ENCODE measurements at regions of chr20 and their contacts with region 1.

Region 1: DNA sequence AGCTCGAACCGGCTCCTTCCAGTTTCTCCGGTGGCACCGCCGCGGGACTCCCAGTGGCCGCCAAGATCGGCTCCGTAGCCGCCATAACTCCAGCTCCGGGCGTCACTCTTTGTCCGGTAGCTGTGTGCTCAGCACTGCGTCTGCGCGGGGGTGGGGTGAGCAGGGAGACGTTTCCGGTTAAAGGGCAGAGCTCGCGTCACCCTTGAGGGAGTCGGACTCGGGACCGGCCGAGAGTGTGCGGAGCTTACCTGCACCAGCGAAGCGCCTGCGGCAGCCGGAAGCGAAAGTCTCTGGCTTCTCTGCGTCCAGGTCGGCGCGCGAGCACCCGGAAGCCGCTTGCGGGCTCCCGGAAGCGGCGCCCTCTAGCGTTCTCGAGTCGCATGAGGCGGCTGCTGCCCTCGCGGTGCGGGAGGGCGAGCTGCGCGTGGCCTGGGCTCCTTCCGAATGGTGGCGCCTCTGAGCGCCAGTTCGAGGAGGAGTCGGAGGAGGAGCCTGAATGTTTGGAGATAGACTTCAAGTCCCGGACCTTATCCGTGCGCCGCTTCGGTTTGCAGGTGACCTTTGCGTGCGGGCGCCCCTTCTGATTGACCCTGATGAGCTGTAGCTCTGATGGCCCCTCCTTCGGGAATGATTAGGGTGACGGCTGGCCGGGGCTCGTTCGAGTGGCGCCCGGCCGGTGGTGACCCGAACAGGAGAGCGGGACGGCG is at the start of gene SCAND1:
- DNase-seq: peak; percentile 94 to 98 (median 97)
- ATAC-seq: peak; percentile 92
- H3K4me3 ChIP-seq: peak within 1 kb of the TSS; percentile 84
- H3K4me3 Mint-ChIP-seq: peak within 1 kb of the TSS; percentile 86 to 99 (median 99)
- H3K27ac ChIP-seq: peak within 1 kb of the TSS; percentile 98
- H3K27ac Mint-ChIP-seq: peak within 1 kb of the TSS; percentile 96 to 100 (median 99)
- H3K4me1 ChIP-seq: peaks cover 17 to 23% of the 10 kb centered on the region in 2 donors
- H3K4me1 Mint-ChIP-seq: peaks cover 13 to 36% (median 22%) of the 10 kb centered on the region in 7 donors
- H3K27me3 ChIP-seq: no peaks in the 10 kb centered on the region
- H3K27me3 Mint-ChIP-seq: peaks cover 0 to 2% (median 0%) of the 10 kb centered on the region in 5 donors
- total RNA-seq, gene SCAND1: 41.8 to 56.2 (median 51.7) TPM

Region 2: DNA sequence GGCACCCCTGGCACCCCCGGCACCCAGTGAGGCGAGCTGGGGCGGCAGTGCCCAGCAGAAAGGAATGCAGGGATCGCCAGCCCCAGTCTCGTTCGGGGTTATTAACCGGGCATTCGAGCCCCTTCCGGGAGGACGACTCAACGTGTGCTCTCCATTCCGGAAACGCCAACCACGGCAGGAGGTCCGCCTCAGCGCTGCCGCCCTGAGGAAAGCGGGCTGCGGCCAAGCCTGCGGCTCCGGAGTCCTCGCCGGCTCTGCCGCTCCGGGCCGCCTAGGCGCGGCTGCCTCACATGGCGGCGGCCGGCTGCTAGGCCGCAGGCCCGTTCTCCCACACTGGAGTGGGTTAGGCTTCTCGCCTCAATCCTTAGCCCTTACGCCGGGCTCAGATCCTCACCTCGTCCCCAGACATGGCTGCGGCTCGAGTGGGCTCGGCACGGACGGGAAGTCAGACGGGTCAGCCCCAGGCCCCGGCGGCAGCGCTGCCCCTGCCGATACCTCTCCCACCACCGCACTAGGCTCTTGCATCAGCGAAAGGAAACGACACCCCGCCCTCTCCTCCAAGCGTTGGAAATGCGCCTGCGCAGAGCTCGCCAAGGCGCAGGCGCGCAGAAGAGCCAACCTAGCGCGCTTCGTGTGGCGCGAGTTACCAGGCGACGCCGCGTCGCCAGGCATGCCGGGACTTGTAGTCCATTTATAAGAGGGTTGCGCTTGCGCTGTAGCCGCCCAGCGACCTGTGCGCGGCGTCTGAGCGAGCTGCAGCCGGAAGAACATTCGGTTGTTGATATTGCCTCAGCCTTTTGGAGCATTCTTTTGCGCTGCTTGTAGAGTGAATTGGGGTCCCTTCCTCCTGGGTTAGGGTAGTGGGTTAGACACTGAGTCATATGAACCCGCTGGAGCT is 1842.4 kb before region 1 on chr20 and contains the start of gene EIF2S2:
- CTCF ChIA-PET with region 1: no interaction called
- POLR2A ChIA-PET with region 1: no interaction called
- intact Hi-C with region 1: loop called in 1 of 2 experiments (anchors 1 kb)
- DNase-seq: peak; percentile 88 to 97 (median 95)
- ATAC-seq: peak; percentile 95
- H3K4me3 ChIP-seq: peak within 1 kb of the TSS; percentile 92
- H3K4me3 Mint-ChIP-seq: peak within 1 kb of the TSS; percentile 87 to 98 (median 96)
- H3K27ac ChIP-seq: peak within 1 kb of the TSS; percentile 89
- H3K27ac Mint-ChIP-seq: peak within 1 kb of the TSS; percentile 96 to 99 (median 98)
- H3K4me1 ChIP-seq: peaks cover 24 to 34% of the 10 kb centered on the region in 2 donors
- H3K4me1 Mint-ChIP-seq: peaks cover 34 to 53% (median 47%) of the 10 kb centered on the region in 7 donors
- H3K27me3 ChIP-seq: no peaks in the 10 kb centered on the region
- H3K27me3 Mint-ChIP-seq: peaks cover 0 to 15% (median 0%) of the 10 kb centered on the region in 5 donors
- total RNA-seq, gene EIF2S2: 16.8 to 68.4 (median 48.6) TPM

Region 3: GRCh38 chr20:35092524-35093266 is 861.7 kb before region 1 on chr20 and contains the start of gene TRPC4AP:
- CTCF ChIA-PET with region 1: no interaction called
- POLR2A ChIA-PET with region 1: no interaction called
- intact Hi-C with region 1: loop called in 1 of 2 experiments (anchors 10 kb)
- DNase-seq: peak; percentile 83 to 90 (median 87)
- ATAC-seq: peak; percentile 99
- H3K4me3 ChIP-seq: peak within 1 kb of the TSS; percentile 77
- H3K4me3 Mint-ChIP-seq: peak within 1 kb of the TSS; percentile 87 to 98 (median 90)
- H3K27ac ChIP-seq: peak within 1 kb of the TSS; percentile 89
- H3K27ac Mint-ChIP-seq: peak within 1 kb of the TSS; percentile 81 to 98 (median 94)
- H3K4me1 ChIP-seq: peaks cover 15 to 22% of the 10 kb centered on the region in 2 donors
- H3K4me1 Mint-ChIP-seq: peaks cover 27 to 54% (median 51%) of the 10 kb centered on the region in 7 donors
- H3K27me3 ChIP-seq: no peaks in the 10 kb centered on the region
- H3K27me3 Mint-ChIP-seq: no peaks in the 10 kb centered on the region
- total RNA-seq, gene TRPC4AP: 50.5 to 66.0 (median 60.6) TPM

Region 4: GRCh38 chr20:35541783-35542588 is 412.4 kb before region 1 on chr20 and contains the start of gene ERGIC3:
- CTCF ChIA-PET with region 1: no interaction called
- POLR2A ChIA-PET with region 1: interaction called, 7 read pairs
- intact Hi-C with region 1: loop called (anchors 1 to 5 kb)
- DNase-seq: peak; percentile 94 to 98 (median 95)
- ATAC-seq: peak; percentile 100
- H3K4me3 ChIP-seq: peak within 1 kb of the TSS; percentile 82
- H3K4me3 Mint-ChIP-seq: peak within 1 kb of the TSS; percentile 88 to 92 (median 91)
- H3K27ac ChIP-seq: peak within 1 kb of the TSS; percentile 77
- H3K27ac Mint-ChIP-seq: peak within 1 kb of the TSS; percentile 82 to 96 (median 91)
- H3K4me1 ChIP-seq: peaks cover 11 to 12% of the 10 kb centered on the region in 2 donors
- H3K4me1 Mint-ChIP-seq: peaks cover 9 to 32% (median 23%) of the 10 kb centered on the region in 7 donors
- H3K27me3 ChIP-seq: no peaks in the 10 kb centered on the region
- H3K27me3 Mint-ChIP-seq: no peaks in the 10 kb centered on the region
- total RNA-seq, gene ERGIC3: 139 to 158 (median 148) TPM

Region 5: DNA sequence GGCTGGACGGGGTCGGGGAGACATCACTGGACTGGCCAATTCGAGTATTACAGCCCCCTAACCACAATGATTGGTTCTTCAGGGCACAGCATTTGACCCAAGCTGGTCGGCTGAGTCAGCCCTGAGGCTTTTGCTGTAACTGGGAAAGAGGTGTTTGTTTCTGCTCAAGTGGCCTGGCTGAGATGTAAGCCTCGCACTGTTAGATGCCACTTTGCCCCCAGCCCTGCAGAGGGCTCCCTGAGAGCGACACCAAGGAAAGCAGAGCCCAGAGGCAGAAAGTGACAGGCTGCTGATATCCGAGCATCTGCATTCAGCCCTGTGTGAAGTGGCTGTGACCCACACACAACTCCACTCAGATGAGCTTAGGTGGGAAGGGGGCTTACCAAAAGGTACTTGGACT is 393.1 kb before region 1 on chr20:
- CTCF ChIA-PET with region 1: no interaction called
- POLR2A ChIA-PET with region 1: no interaction called
- intact Hi-C with region 1: no loop called
- DNase-seq: peak in 5 of 9 donors; percentile 14 to 23 (median 16)
- ATAC-seq: peak; percentile 65
- H3K4me3 ChIP-seq: no peak overlapping the region
- H3K4me3 Mint-ChIP-seq: no peak overlapping the region
- H3K27ac ChIP-seq: no peak overlapping the region
- H3K27ac Mint-ChIP-seq: peak overlapping the region in 1 of 9 donors; percentile 9
- H3K4me1 ChIP-seq: no peaks in the 10 kb centered on the region
- H3K4me1 Mint-ChIP-seq: no peaks in the 10 kb centered on the region
- H3K27me3 ChIP-seq: no peaks in the 10 kb centered on the region
- H3K27me3 Mint-ChIP-seq: no peaks in the 10 kb centered on the region

Region 6: DNA sequence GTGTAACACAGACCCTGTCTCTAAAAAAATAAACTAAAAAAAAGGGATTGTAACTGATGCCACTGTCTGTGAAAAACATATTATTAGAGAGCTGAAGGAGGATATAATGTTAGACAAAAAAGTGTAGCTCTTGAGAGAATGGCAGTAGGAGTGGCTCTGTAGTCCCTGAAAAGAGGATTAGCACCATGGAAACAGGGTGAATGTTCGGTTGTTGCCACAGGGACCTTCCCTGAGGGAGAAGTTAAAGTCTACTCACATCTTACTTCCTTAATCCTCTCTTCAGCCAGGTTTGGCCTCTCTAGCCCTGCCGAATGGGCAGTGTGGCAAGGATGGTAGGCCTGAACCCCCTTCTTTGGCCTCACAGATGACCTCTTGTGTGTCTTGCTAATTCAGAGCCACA is 12.1 kb before region 1 on chr20:
- CTCF ChIA-PET with region 1: interaction called, 7 read pairs
- POLR2A ChIA-PET with region 1: interaction called, 15 read pairs
- intact Hi-C with region 1: no loop called
- DNase-seq: no peak
- ATAC-seq: no peak
- H3K4me3 ChIP-seq: no peak overlapping the region
- H3K4me3 Mint-ChIP-seq: no peak overlapping the region
- H3K27ac ChIP-seq: no peak overlapping the region
- H3K27ac Mint-ChIP-seq: peak overlapping the region in 2 of 9 donors; percentile 1 to 30
- H3K4me1 ChIP-seq: no peaks in the 10 kb centered on the region
- H3K4me1 Mint-ChIP-seq: peaks cover 0 to 5% (median 0%) of the 10 kb centered on the region in 7 donors
- H3K27me3 ChIP-seq: no peaks in the 10 kb centered on the region
- H3K27me3 Mint-ChIP-seq: no peaks in the 10 kb centered on the region

Region 7: GRCh38 chr20:36645998-36646397 is 691.6 kb after region 1 on chr20 and contains the start of gene SLA2:
- CTCF ChIA-PET with region 1: no interaction called
- POLR2A ChIA-PET with region 1: no interaction called
- intact Hi-C with region 1: no loop called
- DNase-seq: peak; percentile 36 to 75 (median 67)
- ATAC-seq: peak; percentile 92
- H3K4me3 ChIP-seq: peak within 1 kb of the TSS; percentile 82
- H3K4me3 Mint-ChIP-seq: peak within 1 kb of the TSS; percentile 93 to 100 (median 99)
- H3K27ac ChIP-seq: peak within 1 kb of the TSS; percentile 85
- H3K27ac Mint-ChIP-seq: peak within 1 kb of the TSS; percentile 94 to 99 (median 97)
- H3K4me1 ChIP-seq: peaks cover 30 to 35% of the 10 kb centered on the region in 2 donors
- H3K4me1 Mint-ChIP-seq: peaks cover 31 to 67% (median 58%) of the 10 kb centered on the region in 7 donors
- H3K27me3 ChIP-seq: no peaks in the 10 kb centered on the region
- H3K27me3 Mint-ChIP-seq: no peaks in the 10 kb centered on the region
- total RNA-seq, gene SLA2: 28.3 to 80.7 (median 29.7) TPM

Region 8: GRCh38 chr20:36745927-36746659 is 791.7 kb after region 1 on chr20 and contains the start of gene NDRG3:
- CTCF ChIA-PET with region 1: no interaction called
- POLR2A ChIA-PET with region 1: no interaction called
- intact Hi-C with region 1: loop called in 1 of 2 experiments (anchors 1 kb)
- DNase-seq: peak; percentile 81 to 93 (median 91)
- ATAC-seq: peak; percentile 100
- H3K4me3 ChIP-seq: peak within 1 kb of the TSS; percentile 93
- H3K4me3 Mint-ChIP-seq: peak within 1 kb of the TSS; percentile 85 to 94 (median 90)
- H3K27ac ChIP-seq: peak within 1 kb of the TSS; percentile 70
- H3K27ac Mint-ChIP-seq: peak within 1 kb of the TSS; percentile 83 to 97 (median 88)
- H3K4me1 ChIP-seq: peaks cover 5 to 7% of the 10 kb centered on the region in 2 donors
- H3K4me1 Mint-ChIP-seq: peaks cover 20 to 41% (median 29%) of the 10 kb centered on the region in 7 donors
- H3K27me3 ChIP-seq: no peaks in the 10 kb centered on the region
- H3K27me3 Mint-ChIP-seq: no peaks in the 10 kb centered on the region
- total RNA-seq, gene NDRG3: 20.8 to 30.6 (median 28.9) TPM

Measured in naive thymus-derived CD4-positive, alpha-beta T cell (primary cell).